H1 (cell line): ENCODE measurements at regions of chr9 and their contacts with region 1.

Region 1: DNA sequence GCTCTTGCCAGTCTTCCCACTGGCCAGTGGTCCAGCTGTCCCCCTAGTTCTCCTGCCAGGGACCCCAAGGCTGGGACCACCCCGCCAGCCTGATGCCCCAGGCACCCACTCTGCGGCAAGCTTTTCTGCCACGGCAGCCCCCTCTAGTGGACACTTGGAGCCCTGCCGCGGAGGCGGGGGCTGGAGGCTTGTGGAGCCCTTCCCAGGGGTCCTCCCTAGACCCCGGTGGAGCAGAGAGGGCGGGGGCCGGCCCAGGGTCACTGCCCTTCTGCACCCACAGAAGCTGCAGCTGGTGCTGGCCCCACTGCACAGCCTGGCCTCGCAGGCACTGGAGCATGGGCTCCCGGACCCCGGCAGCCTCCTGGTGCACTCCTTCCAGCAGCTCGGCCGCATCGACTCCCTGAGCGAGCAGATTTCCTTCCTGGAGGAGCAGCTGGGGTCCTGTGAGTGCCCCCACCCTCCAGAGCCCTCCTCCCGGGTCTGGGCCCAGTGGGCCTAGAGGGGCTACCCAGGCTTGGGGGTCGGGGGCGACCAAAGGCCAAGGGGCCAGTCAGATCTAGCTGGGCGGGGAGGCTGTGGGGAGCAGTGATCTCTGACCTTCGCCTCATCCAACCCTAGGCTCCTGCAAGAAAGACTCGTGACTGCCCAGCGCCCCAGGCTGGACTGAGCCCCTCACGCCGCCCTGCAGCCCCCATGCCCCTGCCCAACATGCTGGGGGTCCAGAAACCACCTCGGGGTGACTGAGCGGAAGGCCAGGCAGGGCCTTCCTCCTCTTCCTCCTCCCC is 9.1 kb downstream of the EGFL7 start:
- DNase-seq: peak in 1 of 2 experiments; percentile 92
- H3K4me3 ChIP-seq: no peak overlapping the region
- H3K27ac ChIP-seq: no peak overlapping the region
- H3K4me1 ChIP-seq: peaks cover 0 to 4% (median 0%) of the 10 kb centered on the region in 4 experiments; a peak in 3 of 7 replicates
- H3K27me3 ChIP-seq: no peaks in the 10 kb centered on the region
- CTCF ChIP-seq: peak in 2 of 3 experiments; percentile 76 to 84; a peak in 3 of 4 replicates
- EP300 ChIP-seq: no peak
- POLR2A ChIP-seq: no peak
- RAD21 ChIP-seq: peak; percentile 38 to 60; a peak in 3 of 4 replicates

Region 2: GRCh38 chr9:136467766-136468563 is 203.9 kb before region 1 on chr9:
- CTCF ChIA-PET with region 1: no interaction called
- POLR2A ChIA-PET with region 1: no interaction called
- DNase-seq: no peak
- H3K4me3 ChIP-seq: no peak overlapping the region
- H3K27ac ChIP-seq: no peak overlapping the region
- H3K4me1 ChIP-seq: no peaks in the 10 kb centered on the region
- H3K27me3 ChIP-seq: no peaks in the 10 kb centered on the region
- CTCF ChIP-seq: no peak
- EP300 ChIP-seq: no peak
- POLR2A ChIP-seq: no peak
- RAD21 ChIP-seq: no peak

Region 3: GRCh38 chr9:136482793-136483588 is 188.8 kb before region 1 on chr9 and contains the start of gene SEC16A:
- CTCF ChIA-PET with region 1: interaction called, 15 read pairs
- POLR2A ChIA-PET with region 1: no interaction called
- DNase-seq: peak; percentile 97 to 99
- H3K4me3 ChIP-seq: peak within 1 kb of the TSS; percentile 75 to 98 (median 86)
- H3K27ac ChIP-seq: peak within 1 kb of the TSS; percentile 100
- H3K4me1 ChIP-seq: peaks cover 2 to 13% (median 3%) of the 10 kb centered on the region in 4 experiments
- H3K27me3 ChIP-seq: no peaks in the 10 kb centered on the region
- CTCF ChIP-seq: no peak
- EP300 ChIP-seq: peak in 1 of 2 experiments; percentile 7; a peak in 1 of 3 replicates
- POLR2A ChIP-seq: peak in 1 of 2 experiments; percentile 37; a peak in 1 of 3 replicates
- RAD21 ChIP-seq: no peak
- total RNA-seq, gene SEC16A: 47.1 and 49.0 TPM in 2 replicates

Region 4: DNA sequence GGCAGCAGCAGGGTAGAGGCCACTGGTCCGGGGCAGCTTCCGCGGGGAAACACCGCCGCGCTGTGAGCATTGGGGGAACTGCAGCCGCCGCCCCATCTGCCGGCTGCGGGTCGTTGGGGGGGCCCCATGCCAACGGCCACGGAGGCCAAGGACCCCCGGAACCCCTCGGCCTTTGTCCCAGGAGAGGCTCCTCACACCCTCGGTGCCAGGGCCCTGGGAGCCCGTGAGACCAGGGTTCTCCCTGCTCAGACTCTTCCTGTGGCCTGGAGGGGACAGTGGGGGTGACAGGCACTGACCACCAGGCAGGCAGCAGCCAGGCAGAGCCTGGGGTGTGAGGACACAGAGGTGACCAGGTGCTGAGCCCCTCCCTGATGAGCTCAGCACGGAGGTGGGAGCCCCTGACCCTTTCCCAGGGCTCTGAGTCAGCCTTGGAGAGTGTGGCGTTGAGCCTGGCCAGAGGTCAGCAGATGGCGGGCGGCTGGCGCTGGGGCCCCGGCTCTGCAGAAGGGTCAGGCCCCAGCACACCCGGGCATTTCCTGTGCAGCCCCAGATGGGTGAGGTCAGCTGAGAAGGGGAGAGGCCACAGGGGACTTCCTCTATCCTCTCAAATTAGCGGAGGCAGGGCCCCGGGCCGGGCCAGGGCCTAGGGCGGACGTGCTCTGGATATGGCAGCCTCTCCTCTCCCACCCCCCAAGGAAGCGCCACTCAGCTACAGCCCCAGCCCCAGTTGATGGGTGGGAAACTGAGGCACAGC is 27.1 kb before region 1 on chr9:
- CTCF ChIA-PET with region 1: interaction called, 28 read pairs
- POLR2A ChIA-PET with region 1: no interaction called
- DNase-seq: peak in 1 of 2 experiments; percentile 93
- H3K4me3 ChIP-seq: peak overlapping the region in 2 of 4 experiments; percentile 10 to 45; a peak in 1 of 8 replicates
- H3K27ac ChIP-seq: no peak overlapping the region
- H3K4me1 ChIP-seq: peaks cover 0 to 10% (median 3%) of the 10 kb centered on the region in 4 experiments; a peak in 4 of 7 replicates
- H3K27me3 ChIP-seq: peaks cover 0 to 6% (median 0%) of the 10 kb centered on the region in 4 experiments; a peak in 1 of 7 replicates
- CTCF ChIP-seq: peak; percentile 82 to 95 (median 88)
- EP300 ChIP-seq: no peak
- POLR2A ChIP-seq: no peak
- RAD21 ChIP-seq: peak; percentile 84 to 89

Region 5: DNA sequence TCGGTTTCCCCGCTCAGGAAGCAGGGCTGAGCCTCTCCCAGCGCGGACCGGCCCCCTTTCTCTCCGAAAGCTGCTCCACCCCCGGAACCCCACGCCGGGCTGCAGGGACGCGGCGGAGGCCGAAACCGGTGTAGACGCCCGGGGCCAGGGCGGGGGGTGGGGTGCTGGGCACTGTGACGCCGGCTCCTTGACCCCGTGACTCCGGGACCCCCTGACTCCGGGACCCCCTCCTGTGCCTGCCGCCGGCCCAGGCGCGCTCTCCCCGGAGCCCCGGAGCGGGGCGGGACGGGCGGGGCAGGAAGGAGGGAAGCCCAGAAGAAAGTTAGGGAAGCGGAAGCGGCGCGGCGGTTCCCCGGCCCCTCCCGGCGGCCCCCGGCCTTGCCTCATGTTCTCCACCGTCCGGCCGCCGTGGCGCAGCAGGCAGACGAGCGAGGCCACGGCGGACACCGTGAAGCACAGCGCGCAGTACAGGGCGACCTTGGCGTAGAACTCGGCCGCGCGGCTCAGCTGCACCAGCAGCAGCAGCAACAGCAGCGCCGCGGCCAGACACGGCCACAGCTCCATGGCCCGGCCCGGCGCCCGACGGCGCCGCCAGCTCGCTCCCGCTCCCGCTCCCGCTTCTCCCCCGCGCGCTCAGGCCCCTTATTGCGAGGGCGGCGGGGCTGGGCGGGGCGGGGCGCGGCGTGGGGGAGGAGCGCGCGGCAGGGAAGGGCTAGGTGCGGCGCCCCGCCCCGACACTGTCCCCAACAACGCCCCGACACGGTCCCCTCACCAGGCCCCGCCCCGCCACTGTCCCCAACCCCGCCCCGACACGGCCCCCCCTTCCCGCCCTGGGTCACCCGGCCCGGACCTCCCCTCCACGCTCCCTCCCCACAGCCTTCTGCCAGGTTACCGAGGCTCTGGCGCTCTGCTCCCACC is 15.2 kb after region 1 on chr9 and contains the start of gene AGPAT2:
- CTCF ChIA-PET with region 1: interaction called, 125 read pairs
- POLR2A ChIA-PET with region 1: interaction called, 15 read pairs
- DNase-seq: peak in 1 of 2 experiments; percentile 71
- H3K4me3 ChIP-seq: peak within 1 kb of the TSS; percentile 56 to 85 (median 64)
- H3K27ac ChIP-seq: no peak within 1 kb of the TSS
- H3K4me1 ChIP-seq: peaks cover 0 to 31% (median 18%) of the 10 kb centered on the region in 4 experiments; a peak in 5 of 7 replicates
- H3K27me3 ChIP-seq: peaks cover 0 to 11% (median 5%) of the 10 kb centered on the region in 4 experiments; a peak in 4 of 7 replicates
- CTCF ChIP-seq: no peak
- EP300 ChIP-seq: no peak
- POLR2A ChIP-seq: no peak
- RAD21 ChIP-seq: no peak
- total RNA-seq, gene AGPAT2: 30.5 and 31.6 TPM in 2 replicates

Region 6: GRCh38 chr9:136711751-136712689 is 40.2 kb after region 1 on chr9 and contains the start of gene DIPK1B:
- CTCF ChIA-PET with region 1: interaction called, 10 read pairs
- POLR2A ChIA-PET with region 1: no interaction called
- DNase-seq: peak in 1 of 2 experiments; percentile 86
- H3K4me3 ChIP-seq: peak within 1 kb of the TSS; percentile 65 to 94 (median 78)
- H3K27ac ChIP-seq: no peak within 1 kb of the TSS; the same call in 1 of the 2 replicates
- H3K4me1 ChIP-seq: peaks cover 0 to 12% (median 6%) of the 10 kb centered on the region in 4 experiments; a peak in 5 of 7 replicates
- H3K27me3 ChIP-seq: peaks cover 0 to 4% (median 3%) of the 10 kb centered on the region in 4 experiments; a peak in 4 of 7 replicates
- CTCF ChIP-seq: no peak
- EP300 ChIP-seq: no peak
- POLR2A ChIP-seq: no peak; a peak in 1 of 3 replicates
- RAD21 ChIP-seq: no peak
- total RNA-seq, gene DIPK1B: 32.3 and 35.3 TPM in 2 replicates